Brain microvascular endothelial cell (primary cell): ENCODE measurements at regions of chr13 and their contacts with region 1.

Region 1: GRCh38 chr13:98653463-98653985 is 76.6 kb upstream of the STK24 start:
- DNase-seq: peak; percentile 66
- H3K4me3 ChIP-seq: no peak overlapping the region
- H3K27ac ChIP-seq: no peak overlapping the region
- H3K27me3 ChIP-seq: no peaks in the 10 kb centered on the region
- CTCF ChIP-seq: peak; percentile 91

Region 2: DNA sequence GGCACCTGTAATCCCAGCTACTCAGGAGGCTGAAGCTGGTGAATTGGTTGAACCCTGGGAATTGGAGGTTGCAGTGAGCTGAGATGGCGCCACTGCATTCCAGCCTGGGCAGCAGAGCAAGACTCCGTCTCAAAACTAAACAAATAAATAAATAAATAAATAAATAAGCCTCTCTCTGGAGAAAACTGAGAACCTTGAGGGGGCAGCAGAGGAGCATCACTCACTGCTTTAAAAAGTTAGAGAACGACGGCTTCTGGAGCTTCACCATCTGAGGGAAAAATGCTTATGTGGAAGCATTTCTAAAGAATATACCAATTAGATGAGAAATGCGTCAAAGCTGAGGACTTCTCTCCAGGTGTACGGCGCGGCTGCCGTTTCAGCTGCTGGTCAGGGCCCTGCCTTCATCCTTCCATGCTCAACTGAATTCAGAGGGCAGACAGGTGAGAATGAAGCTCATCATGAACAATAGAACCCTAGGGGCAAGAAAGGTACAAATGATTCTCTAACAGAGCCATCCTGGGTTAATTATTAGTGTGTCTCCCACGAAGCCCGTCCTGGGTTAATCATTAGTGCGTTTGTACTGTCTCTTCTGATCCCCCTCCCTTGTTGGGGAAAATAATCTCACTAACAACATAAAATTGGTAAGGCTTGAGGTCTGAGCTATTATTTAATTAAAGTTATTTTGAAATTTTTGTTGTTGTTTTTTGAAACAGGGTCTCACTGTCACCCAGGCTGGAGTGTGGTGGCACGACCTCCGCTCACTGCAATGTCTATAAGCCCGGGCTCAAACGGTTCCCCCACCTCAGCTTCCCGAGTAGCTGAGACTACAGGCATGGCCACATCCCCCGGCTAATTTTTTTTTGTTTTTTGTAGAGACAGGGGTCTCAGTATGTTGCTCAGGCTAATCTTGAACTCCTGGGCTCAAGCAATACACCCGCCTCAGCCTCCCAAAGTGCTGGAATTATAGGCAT is 620.0 kb before region 1 on chr13:
- in situ Hi-C with region 1: loop called (anchors 25 kb)
- DNase-seq: peak; percentile 71
- H3K4me3 ChIP-seq: no peak overlapping the region
- H3K27ac ChIP-seq: no peak overlapping the region
- H3K27me3 ChIP-seq: no peaks in the 10 kb centered on the region
- CTCF ChIP-seq: peak; percentile 72

Region 3: GRCh38 chr13:98445340-98446233 is 207.9 kb before region 1 on chr13:
- in situ Hi-C with region 1: loop called (anchors 25 kb)
- DNase-seq: peak; percentile 34
- H3K4me3 ChIP-seq: no peak overlapping the region
- H3K27ac ChIP-seq: no peak overlapping the region
- H3K27me3 ChIP-seq: no peaks in the 10 kb centered on the region
- CTCF ChIP-seq: peak; percentile 97

Region 4: DNA sequence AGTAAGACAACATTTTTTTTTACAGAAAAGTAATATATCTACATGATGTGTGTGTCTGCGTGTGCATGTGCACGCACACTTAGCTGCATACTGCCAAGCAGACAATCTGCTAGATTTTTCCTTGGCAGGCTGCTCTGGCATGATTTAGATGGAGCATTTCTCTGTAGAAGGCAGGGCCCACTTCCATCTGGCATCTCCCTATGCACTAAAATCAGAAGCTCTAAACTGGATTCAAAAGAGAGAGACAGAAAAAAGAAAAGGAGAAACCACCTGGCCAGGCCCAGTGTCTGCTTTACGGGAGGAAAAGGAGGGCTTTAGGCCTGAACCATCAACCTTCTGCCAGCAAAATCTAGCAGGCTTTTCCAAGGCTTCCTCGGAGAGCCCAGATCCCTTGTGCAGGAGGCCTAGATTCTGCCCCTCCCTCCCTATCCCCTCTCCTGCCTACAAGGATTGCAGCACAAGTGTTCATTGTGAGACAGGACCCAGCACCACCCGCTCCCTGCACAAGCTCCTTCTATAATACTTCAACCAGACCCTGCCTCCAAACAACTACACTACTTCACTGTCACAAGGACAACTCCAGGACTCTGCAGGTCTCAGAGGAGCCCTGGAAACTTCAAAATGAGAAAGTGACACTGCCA is 225.1 kb after region 1 on chr13:
- in situ Hi-C with region 1: no loop called
- DNase-seq: no peak
- H3K4me3 ChIP-seq: no peak overlapping the region
- H3K27ac ChIP-seq: no peak overlapping the region
- H3K27me3 ChIP-seq: no peaks in the 10 kb centered on the region
- CTCF ChIP-seq: no peak